Panc1 (cell line): ENCODE measurements at regions of chr9 and their contacts with region 1.

Region 1: GRCh38 chr9:137247135-137247915 is 3.8 kb upstream of the STPG3 start:
- DNase-seq: no peak
- ATAC-seq: no peak
- H3K4me3 ChIP-seq: no peak overlapping the region
- H3K27ac ChIP-seq: no peak overlapping the region
- H3K4me1 ChIP-seq: peaks cover 16% of the 10 kb centered on the region
- H3K27me3 ChIP-seq: no peaks in the 10 kb centered on the region
- CTCF ChIP-seq: no peak

Region 2: GRCh38 chr9:137129456-137130175 is 117.7 kb before region 1 on chr9:
- CTCF ChIA-PET with region 1: no interaction called
- POLR2A ChIA-PET with region 1: interaction called, 10 read pairs
- in situ Hi-C with region 1: no loop called
- intact Hi-C with region 1: no loop called
- DNase-seq: peak; percentile 39
- ATAC-seq: peak; percentile 97
- H3K4me3 ChIP-seq: peak overlapping the region; percentile 68 to 75
- H3K27ac ChIP-seq: peak overlapping the region; percentile 91
- H3K4me1 ChIP-seq: peaks cover 3% of the 10 kb centered on the region; the same call in 1 of the 2 replicates
- H3K27me3 ChIP-seq: no peaks in the 10 kb centered on the region
- CTCF ChIP-seq: no peak

Region 3: GRCh38 chr9:137162505-137163100 is 84.7 kb before region 1 on chr9:
- CTCF ChIA-PET with region 1: no interaction called
- POLR2A ChIA-PET with region 1: interaction called, 17 read pairs
- in situ Hi-C with region 1: no loop called
- intact Hi-C with region 1: no loop called
- DNase-seq: no peak
- ATAC-seq: peak; percentile 61
- H3K4me3 ChIP-seq: peak overlapping the region; percentile 32 to 52
- H3K27ac ChIP-seq: no peak overlapping the region
- H3K4me1 ChIP-seq: peaks cover 4% of the 10 kb centered on the region; the same call in 1 of the 2 replicates
- H3K27me3 ChIP-seq: no peaks in the 10 kb centered on the region
- CTCF ChIP-seq: no peak; the same call in 1 of the 2 replicates

Region 4: GRCh38 chr9:137277329-137278041 is 30.2 kb after region 1 on chr9 and contains the start of gene TOR4A:
- CTCF ChIA-PET with region 1: no interaction called
- POLR2A ChIA-PET with region 1: no interaction called
- in situ Hi-C with region 1: no loop called
- intact Hi-C with region 1: no loop called
- DNase-seq: no peak
- ATAC-seq: peak; percentile 89
- H3K4me3 ChIP-seq: peak within 1 kb of the TSS; percentile 55 to 73
- H3K27ac ChIP-seq: peak within 1 kb of the TSS; percentile 84
- H3K4me1 ChIP-seq: peaks cover 13% of the 10 kb centered on the region
- H3K27me3 ChIP-seq: no peaks in the 10 kb centered on the region
- CTCF ChIP-seq: peak; percentile 64
- total RNA-seq, gene TOR4A: 37.1 TPM